Naive thymus-derived CD4-positive, alpha-beta T cell (primary cell): ENCODE measurements at regions of chr16 and their contacts with region 1.

Region 1: GRCh38 chr16:89700100-89700648 is 1.3 kb downstream of the SPATA2L start:
- DNase-seq: peak; percentile 88 to 99 (median 92)
- ATAC-seq: peak; percentile 52
- H3K4me3 ChIP-seq: peak overlapping the region; percentile 41
- H3K4me3 Mint-ChIP-seq: peak overlapping the region; percentile 52 to 84 (median 74)
- H3K27ac ChIP-seq: peak overlapping the region; percentile 73
- H3K27ac Mint-ChIP-seq: peak overlapping the region in 8 of 9 donors; percentile 46 to 89 (median 80)
- H3K4me1 ChIP-seq: peaks cover 27 to 28% of the 10 kb centered on the region in 2 donors
- H3K4me1 Mint-ChIP-seq: peaks cover 0 to 34% (median 17%) of the 10 kb centered on the region in 7 donors
- H3K27me3 ChIP-seq: no peaks in the 10 kb centered on the region
- H3K27me3 Mint-ChIP-seq: no peaks in the 10 kb centered on the region

Region 2: DNA sequence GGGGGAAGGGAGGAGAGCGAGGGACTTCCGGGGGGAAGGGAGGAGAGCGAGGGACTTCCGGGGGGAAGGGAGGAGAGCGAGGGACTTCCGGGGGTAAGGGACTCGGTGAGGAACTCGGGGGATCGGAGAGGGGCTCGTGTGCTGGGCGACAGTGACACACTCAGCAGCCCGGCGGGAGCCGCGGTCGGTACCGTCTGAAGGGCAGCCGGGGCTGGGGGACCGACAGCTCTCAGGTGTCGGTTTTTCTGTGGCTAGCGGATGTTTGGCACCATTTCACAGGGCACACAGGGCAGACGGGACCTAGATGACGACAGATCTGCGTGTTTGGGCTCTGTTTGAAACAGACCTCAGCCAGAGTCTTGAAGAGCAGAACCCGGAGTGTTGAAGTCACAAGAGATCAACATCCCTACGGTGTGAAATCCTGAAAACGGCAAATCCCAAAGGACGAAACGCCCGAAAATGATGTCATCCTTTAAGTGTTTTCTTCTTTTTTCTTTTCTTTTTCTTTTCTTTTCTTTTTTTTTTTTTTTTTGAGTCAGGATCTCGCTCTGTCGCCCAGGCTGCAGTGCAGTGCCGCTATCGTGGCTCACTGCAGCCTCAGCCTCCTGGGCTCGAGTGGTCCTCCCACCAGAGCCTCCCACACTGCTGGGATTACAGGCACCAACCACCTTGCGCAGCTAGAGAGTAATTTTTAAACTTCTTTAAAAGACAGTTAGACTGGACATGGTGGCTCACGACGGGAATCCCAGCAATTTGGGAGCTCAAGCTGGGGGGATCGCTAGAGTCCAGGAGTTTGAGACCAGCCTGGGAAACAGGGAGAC is 458.8 kb before region 1 on chr16:
- CTCF ChIA-PET with region 1: no interaction called
- POLR2A ChIA-PET with region 1: no interaction called
- intact Hi-C with region 1: loop called in 1 of 2 experiments (anchors 10 kb)
- DNase-seq: peak; percentile 75 to 95 (median 93)
- ATAC-seq: peak; percentile 86
- H3K4me3 ChIP-seq: peak overlapping the region; percentile 68
- H3K4me3 Mint-ChIP-seq: peak overlapping the region; percentile 83 to 100 (median 96)
- H3K27ac ChIP-seq: peak overlapping the region; percentile 91
- H3K27ac Mint-ChIP-seq: peak overlapping the region; percentile 94 to 100 (median 99)
- H3K4me1 ChIP-seq: peaks cover 5 to 6% of the 10 kb centered on the region in 2 donors
- H3K4me1 Mint-ChIP-seq: peaks cover 0 to 31% (median 18%) of the 10 kb centered on the region in 7 donors
- H3K27me3 ChIP-seq: no peaks in the 10 kb centered on the region
- H3K27me3 Mint-ChIP-seq: no peaks in the 10 kb centered on the region

Region 3: GRCh38 chr16:89657442-89658220 is 42.5 kb before region 1 on chr16 and contains the starts of genes CHMP1A and SPATA33:
- CTCF ChIA-PET with region 1: no interaction called
- POLR2A ChIA-PET with region 1: interaction called, 13 read pairs
- intact Hi-C with region 1: loop called (anchors 1 kb)
- DNase-seq: peak; percentile 87 to 98 (median 94)
- ATAC-seq: peak; percentile 95
- H3K4me3 ChIP-seq: peak within 1 kb of the TSS; percentile 88
- H3K4me3 Mint-ChIP-seq: peak within 1 kb of the TSS; percentile 82 to 93 (median 86)
- H3K27ac ChIP-seq: peak within 1 kb of the TSS; percentile 85
- H3K27ac Mint-ChIP-seq: peak within 1 kb of the TSS; percentile 71 to 89 (median 85)
- H3K4me1 ChIP-seq: peaks cover 6 to 16% of the 10 kb centered on the region in 2 donors
- H3K4me1 Mint-ChIP-seq: peaks cover 17 to 44% (median 36%) of the 10 kb centered on the region in 7 donors
- H3K27me3 ChIP-seq: no peaks in the 10 kb centered on the region
- H3K27me3 Mint-ChIP-seq: no peaks in the 10 kb centered on the region
- total RNA-seq, gene CHMP1A: 64.4 to 99.0 (median 65.9) TPM
- total RNA-seq, gene SPATA33: 6.4 to 17.0 (median 7.9) TPM

Region 4: GRCh38 chr16:89711601-89712273 is 11.6 kb after region 1 on chr16:
- CTCF ChIA-PET with region 1: interaction called, 12 read pairs
- POLR2A ChIA-PET with region 1: interaction called, 4 read pairs
- intact Hi-C with region 1: loop called (anchors 1 kb)
- DNase-seq: peak; percentile 48 to 86 (median 62)
- ATAC-seq: peak; percentile 96
- H3K4me3 ChIP-seq: peak overlapping the region; percentile 47
- H3K4me3 Mint-ChIP-seq: peak overlapping the region in 7 of 10 donors; percentile 42 to 78 (median 68)
- H3K27ac ChIP-seq: peak overlapping the region; percentile 58
- H3K27ac Mint-ChIP-seq: peak overlapping the region in 1 of 9 donors; percentile 29
- H3K4me1 ChIP-seq: peaks cover 0 to 7% of the 10 kb centered on the region in 2 donors
- H3K4me1 Mint-ChIP-seq: peaks cover 0 to 7% (median 3%) of the 10 kb centered on the region in 7 donors
- H3K27me3 ChIP-seq: no peaks in the 10 kb centered on the region
- H3K27me3 Mint-ChIP-seq: no peaks in the 10 kb centered on the region

Region 5: DNA sequence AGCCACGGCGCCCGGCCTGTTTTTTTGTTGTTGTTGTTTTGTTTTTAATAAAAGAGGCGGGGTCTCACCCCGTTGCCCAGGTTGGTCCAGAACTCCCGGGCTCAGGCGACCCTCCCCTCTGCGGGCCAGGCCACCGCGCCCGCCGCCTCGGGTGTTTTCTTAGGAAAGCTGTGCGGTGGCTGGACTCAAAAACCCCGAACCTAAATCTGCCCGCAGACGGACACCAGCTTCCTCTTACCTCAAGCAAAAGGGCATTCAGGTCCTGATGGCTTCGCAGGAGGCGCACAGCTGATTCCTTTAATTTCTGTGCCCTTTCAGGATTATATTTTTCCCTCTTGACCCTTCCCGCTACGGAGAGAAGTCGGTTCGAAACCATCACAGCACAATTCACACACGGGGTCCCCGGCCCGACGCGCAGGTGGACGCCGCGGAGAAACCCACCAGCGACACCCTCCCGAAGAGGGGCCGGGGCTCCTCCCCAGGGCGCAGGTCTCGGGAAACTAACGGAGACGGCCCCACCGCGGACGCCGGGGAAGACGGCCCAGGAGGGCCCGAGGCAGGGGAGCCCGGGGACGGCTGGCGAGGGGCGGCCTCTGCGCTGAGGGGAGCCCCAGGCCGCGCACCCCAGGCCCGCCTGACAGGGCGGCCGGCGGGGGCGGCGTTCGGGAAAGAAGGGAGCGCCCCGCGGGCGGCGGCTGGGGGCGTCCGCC is 115.6 kb after region 1 on chr16:
- CTCF ChIA-PET with region 1: no interaction called
- POLR2A ChIA-PET with region 1: no interaction called
- intact Hi-C with region 1: loop called (anchors 1 kb)
- DNase-seq: no peak
- ATAC-seq: peak; percentile 14
- H3K4me3 ChIP-seq: peak overlapping the region; percentile 37
- H3K4me3 Mint-ChIP-seq: peak overlapping the region; percentile 68 to 89 (median 80)
- H3K27ac ChIP-seq: peak overlapping the region; percentile 13
- H3K27ac Mint-ChIP-seq: peak overlapping the region in 1 of 9 donors; percentile 66
- H3K4me1 ChIP-seq: peaks cover 3 to 4% of the 10 kb centered on the region in 2 donors
- H3K4me1 Mint-ChIP-seq: peaks cover 10 to 29% (median 20%) of the 10 kb centered on the region in 7 donors
- H3K27me3 ChIP-seq: no peaks in the 10 kb centered on the region
- H3K27me3 Mint-ChIP-seq: no peaks in the 10 kb centered on the region

Region 6: GRCh38 chr16:89873972-89874689 is 174.0 kb after region 1 on chr16:
- CTCF ChIA-PET with region 1: interaction called, 6 read pairs
- POLR2A ChIA-PET with region 1: interaction called, 23 read pairs
- intact Hi-C with region 1: loop called (anchors 1 kb)
- DNase-seq: peak; percentile 87 to 97 (median 90)
- ATAC-seq: peak; percentile 90
- H3K4me3 ChIP-seq: peak overlapping the region; percentile 94
- H3K4me3 Mint-ChIP-seq: peak overlapping the region; percentile 73 to 95 (median 92)
- H3K27ac ChIP-seq: peak overlapping the region; percentile 100
- H3K27ac Mint-ChIP-seq: peak overlapping the region; percentile 89 to 99 (median 97)
- H3K4me1 ChIP-seq: peaks cover 4 to 17% of the 10 kb centered on the region in 2 donors
- H3K4me1 Mint-ChIP-seq: peaks cover 6 to 32% (median 20%) of the 10 kb centered on the region in 7 donors
- H3K27me3 ChIP-seq: no peaks in the 10 kb centered on the region
- H3K27me3 Mint-ChIP-seq: no peaks in the 10 kb centered on the region

Region 7: DNA sequence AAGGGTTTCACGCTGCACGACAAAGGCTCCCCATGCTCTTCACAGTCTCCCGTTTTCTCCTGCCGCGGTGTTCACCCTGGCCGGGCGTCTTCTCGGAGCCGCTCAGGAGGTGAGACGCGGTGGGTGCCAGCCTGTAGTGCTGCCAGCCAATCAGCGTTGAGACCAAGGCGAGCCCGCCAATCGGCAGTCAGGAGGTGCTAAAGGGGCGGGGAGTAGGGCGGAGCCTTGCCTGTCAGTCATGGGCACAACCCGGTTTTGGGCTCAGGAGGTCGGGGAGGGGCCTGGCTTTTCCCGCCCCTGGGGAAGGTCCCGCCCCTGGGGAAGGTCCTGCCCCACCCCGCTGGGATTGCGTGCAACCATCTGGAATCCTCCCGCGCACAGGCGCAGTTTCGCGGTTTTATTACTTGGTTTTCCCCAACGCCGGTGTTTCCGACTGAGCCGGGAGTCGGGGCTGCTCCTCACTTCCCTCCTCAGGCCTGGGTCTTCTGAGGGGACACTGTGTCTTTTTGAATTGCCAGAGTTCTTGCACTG is 377.1 kb after region 1 on chr16 and contains the start of gene PRDM7:
- CTCF ChIA-PET with region 1: interaction called, 3 read pairs
- POLR2A ChIA-PET with region 1: no interaction called
- intact Hi-C with region 1: loop called in 1 of 2 experiments (anchors 5 kb)
- DNase-seq: peak; percentile 87 to 98 (median 94)
- ATAC-seq: peak; percentile 95
- H3K4me3 ChIP-seq: peak within 1 kb of the TSS; percentile 59
- H3K4me3 Mint-ChIP-seq: peak within 1 kb of the TSS; percentile 82 to 97 (median 90)
- H3K27ac ChIP-seq: peak within 1 kb of the TSS; percentile 58
- H3K27ac Mint-ChIP-seq: peak within 1 kb of the TSS; percentile 66 to 94 (median 81)
- H3K4me1 ChIP-seq: peaks cover 0 to 10% of the 10 kb centered on the region in 2 donors
- H3K4me1 Mint-ChIP-seq: peaks cover 14 to 28% (median 22%) of the 10 kb centered on the region in 7 donors
- H3K27me3 ChIP-seq: no peaks in the 10 kb centered on the region
- H3K27me3 Mint-ChIP-seq: peaks cover 0 to 23% (median 13%) of the 10 kb centered on the region in 5 donors
- total RNA-seq, gene PRDM7: not detected